Activated CD4-positive, alpha-beta T cell treated with anti-CD3 and anti-CD28 coated beads, Interleukin-2, amount 10 ng/mL, durations not matched to agents 24 days and 14 days (primary cell): ENCODE measurements at regions of chr1 and their contacts with region 1.

Region 1: GRCh38 chr1:65958561-65959350 is 166.1 kb downstream of the PDE4B start:
- DNase-seq: peak; percentile 82
- H3K4me3 Mint-ChIP-seq: no peak overlapping the region
- H3K27ac Mint-ChIP-seq: no peak overlapping the region
- H3K4me1 Mint-ChIP-seq: peaks cover 4% of the 10 kb centered on the region
- H3K27me3 Mint-ChIP-seq: peaks cover 3% of the 10 kb centered on the region

Region 2: DNA sequence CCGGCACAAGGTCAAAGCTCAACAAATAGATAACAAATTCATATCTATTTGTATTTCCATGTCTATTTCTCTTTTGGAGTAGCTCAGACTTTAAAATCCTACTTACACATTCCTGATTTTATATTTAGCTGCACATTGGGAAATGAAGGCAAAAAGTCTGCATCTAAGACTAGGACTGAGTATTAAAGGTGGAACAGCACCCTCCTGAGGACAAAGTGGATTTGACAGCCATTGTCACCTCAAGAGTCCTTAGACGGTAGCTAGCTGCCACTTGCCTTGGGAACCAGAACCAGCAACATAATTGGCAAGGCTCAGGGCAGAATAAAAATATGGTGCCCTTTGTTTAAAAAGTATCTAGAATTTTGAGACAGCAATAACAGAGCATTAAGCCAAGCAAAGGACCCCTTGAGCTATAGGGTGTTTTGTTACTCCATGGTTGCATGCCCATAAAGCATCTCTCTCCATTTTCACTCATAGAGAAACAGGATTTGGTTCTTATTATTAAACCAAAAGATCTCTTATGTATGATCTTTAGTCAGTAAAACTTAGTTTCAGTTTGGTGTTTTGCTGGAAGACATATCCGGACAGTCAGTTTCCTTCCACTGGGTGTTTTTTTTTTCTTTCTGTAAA is 545.2 kb after region 1 on chr1:
- intact Hi-C with region 1: loop called (anchors 5 kb)
- DNase-seq: peak; percentile 76
- H3K4me3 Mint-ChIP-seq: no peak overlapping the region
- H3K27ac Mint-ChIP-seq: no peak overlapping the region
- H3K4me1 Mint-ChIP-seq: no peaks in the 10 kb centered on the region
- H3K27me3 Mint-ChIP-seq: peaks cover 37% of the 10 kb centered on the region